Adrenal gland (tissue), 19 donors: ENCODE measurements at regions of chr3 and their contacts with region 1.

Region 1: GRCh38 chr3:150627557-150627956 is 24.4 kb downstream of the SELENOT start:
- DNase-seq: no peak
- H3K4me3 ChIP-seq: no peak overlapping the region
- H3K27ac ChIP-seq: no peak overlapping the region
- H3K4me1 ChIP-seq: peaks cover 0 to 6% of the 10 kb centered on the region in 2 donors
- H3K27me3 ChIP-seq: no peaks in the 10 kb centered on the region
- CTCF ChIP-seq: no peak
- POLR2A ChIP-seq: no peak

Region 2: DNA sequence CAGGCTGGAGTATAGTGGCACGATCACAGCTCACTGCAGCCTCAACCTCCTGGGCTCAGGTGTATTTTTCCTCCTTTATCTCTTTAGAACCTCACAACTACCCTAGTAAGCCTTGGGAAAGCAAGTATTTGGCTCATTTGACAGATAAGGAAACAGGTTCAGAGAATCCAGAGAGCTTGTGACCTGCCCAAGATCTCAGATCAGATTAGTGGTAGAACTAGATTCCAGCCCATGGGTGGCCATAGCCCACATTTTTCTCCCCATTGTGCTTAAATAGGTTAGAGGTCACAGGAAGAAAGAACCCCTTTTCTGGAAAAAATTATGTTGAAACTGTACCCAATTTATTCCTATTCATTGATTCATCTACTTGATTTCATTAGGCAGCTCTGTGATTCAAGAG is 155.1 kb before region 1 on chr3:
- intact Hi-C with region 1: no loop called
- DNase-seq: no peak
- H3K4me3 ChIP-seq: no peak overlapping the region
- H3K27ac ChIP-seq: no peak overlapping the region
- H3K4me1 ChIP-seq: no peaks in the 10 kb centered on the region
- H3K27me3 ChIP-seq: no peaks in the 10 kb centered on the region
- CTCF ChIP-seq: no peak
- POLR2A ChIP-seq: no peak

Region 3: GRCh38 chr3:150699068-150699639 is 71.6 kb after region 1 on chr3:
- intact Hi-C with region 1: loop called in 1 of 2 experiments (anchors 10 kb)
- DNase-seq: no peak
- H3K4me3 ChIP-seq: no peak overlapping the region
- H3K27ac ChIP-seq: no peak overlapping the region
- H3K4me1 ChIP-seq: peaks cover under 1% of the 10 kb centered on the region in 2 donors
- H3K27me3 ChIP-seq: no peaks in the 10 kb centered on the region
- CTCF ChIP-seq: no peak
- POLR2A ChIP-seq: no peak